ENCODE measurements at regions of chr17 and their contacts with region 1.

Region 1: GRCh38 chr17:8073627-8074484 is 13.7 kb downstream of the ALOX12B start:
- DNase-seq: no peak
- H3K4me3 ChIP-seq: no peak overlapping the region
- H3K27me3 ChIP-seq: peaks cover 52% of the 10 kb centered on the region
- CTCF ChIP-seq: peak; percentile 94

Region 2: DNA sequence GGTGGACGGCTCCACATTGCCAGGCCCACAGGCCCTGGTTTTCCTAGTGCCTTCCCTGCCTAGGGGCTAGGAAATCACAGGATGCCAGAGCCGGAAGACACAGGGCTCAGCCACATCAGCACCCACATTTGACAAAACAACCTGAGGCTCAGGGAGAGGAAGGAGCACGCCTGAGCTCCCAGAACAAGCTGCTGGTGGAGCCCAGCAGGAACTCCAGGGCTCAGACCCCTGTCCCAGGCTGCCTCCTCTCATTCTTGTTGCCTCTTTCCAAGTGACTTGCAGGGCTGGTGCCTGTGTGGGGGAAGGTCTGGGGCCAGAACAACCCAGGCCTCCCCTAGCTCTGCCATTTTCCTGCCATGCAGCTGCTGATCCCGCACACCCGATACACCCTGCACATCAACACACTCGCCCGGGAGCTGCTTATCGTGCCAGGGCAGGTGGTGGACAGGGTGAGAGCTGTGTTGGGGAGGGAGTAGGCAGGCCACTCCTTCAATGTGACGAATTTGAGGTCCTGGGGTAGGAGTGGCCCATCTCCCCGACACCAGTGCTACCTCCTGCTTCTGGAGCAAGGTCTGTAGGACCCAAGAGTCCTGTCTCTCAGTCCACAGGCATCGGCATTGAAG is 27.4 kb before region 1 on chr17:
- CTCF ChIA-PET with region 1: interaction called, 14 read pairs
- POLR2A ChIA-PET with region 1: no interaction called
- DNase-seq: no peak
- H3K4me3 ChIP-seq: no peak overlapping the region
- H3K27me3 ChIP-seq: peaks cover 22% of the 10 kb centered on the region
- CTCF ChIP-seq: no peak

Region 3: GRCh38 chr17:8062807-8063483 is 10.9 kb before region 1 on chr17:
- CTCF ChIA-PET with region 1: interaction called, 72 read pairs
- POLR2A ChIA-PET with region 1: no interaction called
- DNase-seq: no peak
- H3K4me3 ChIP-seq: no peak overlapping the region
- H3K27me3 ChIP-seq: peaks cover 46% of the 10 kb centered on the region
- CTCF ChIP-seq: no peak

Region 4: GRCh38 chr17:8091033-8091687 is 17.3 kb after region 1 on chr17:
- CTCF ChIA-PET with region 1: interaction called, 63 read pairs
- POLR2A ChIA-PET with region 1: no interaction called
- DNase-seq: no peak
- H3K4me3 ChIP-seq: no peak overlapping the region
- H3K27me3 ChIP-seq: peaks cover 25% of the 10 kb centered on the region
- CTCF ChIP-seq: no peak

Region 5: DNA sequence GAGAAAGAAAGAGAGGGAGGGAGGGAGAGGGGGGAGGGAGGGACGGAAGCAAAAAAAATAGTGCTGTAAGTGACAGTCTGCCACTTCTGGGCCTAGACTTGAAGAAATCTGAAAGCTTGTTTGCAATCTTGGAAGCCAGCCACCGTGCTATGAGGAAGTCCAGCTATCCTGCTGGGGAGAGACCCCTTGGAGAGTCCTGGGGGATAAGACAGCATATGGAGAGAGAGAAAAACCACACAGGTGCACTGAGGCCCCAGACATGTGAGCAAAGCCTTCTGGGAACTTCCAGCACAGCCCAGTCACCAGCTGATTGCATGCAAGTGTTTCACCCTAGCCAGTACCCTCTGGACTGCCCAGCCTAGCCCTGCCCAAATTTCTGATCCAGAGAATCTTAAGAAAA is 26.3 kb after region 1 on chr17:
- CTCF ChIA-PET with region 1: interaction called, 63 read pairs
- POLR2A ChIA-PET with region 1: no interaction called
- DNase-seq: no peak
- H3K4me3 ChIP-seq: no peak overlapping the region
- H3K27me3 ChIP-seq: peaks cover 11% of the 10 kb centered on the region; the same call in 1 of the 2 replicates
- CTCF ChIP-seq: no peak

Region 6: DNA sequence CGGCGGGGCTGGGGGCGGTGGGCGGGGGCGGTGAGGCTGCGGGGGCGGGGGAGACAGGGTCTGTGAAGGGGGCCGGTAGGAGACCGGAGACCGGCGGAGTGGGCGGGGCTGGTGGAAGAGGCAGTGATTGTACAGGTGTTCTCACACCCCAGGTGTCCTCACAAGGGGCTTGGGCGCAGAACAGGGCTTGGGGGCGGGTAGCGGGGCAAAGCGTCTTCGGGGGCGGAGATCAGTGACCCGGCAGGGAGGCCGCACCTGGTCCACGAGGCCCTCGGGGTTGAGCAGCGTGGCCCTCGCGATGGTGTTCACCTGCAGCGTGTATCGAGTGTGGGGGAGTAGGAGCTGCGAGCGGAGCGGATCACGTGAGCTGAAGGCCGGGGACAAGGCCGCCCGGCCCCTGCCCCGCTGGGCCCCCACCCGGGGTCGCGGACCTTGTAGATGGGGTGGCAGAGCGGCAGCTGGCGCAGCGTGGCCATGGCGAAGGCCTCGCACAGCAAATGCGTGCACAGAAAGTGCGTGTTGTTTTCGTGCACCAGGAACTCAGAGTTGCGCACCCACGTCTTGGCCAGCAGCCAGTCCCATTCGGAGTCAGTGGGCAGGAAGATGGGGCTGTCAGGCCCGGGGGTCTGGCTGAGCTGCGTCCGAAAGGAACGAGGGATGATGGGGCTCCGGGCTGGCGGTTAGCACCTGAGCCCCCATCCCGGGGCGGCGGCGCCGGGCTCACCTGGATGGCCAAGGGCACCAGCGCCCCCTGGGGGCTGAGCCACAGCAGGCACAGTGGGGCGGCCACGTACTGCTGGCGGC is 36.0 kb after region 1 on chr17:
- CTCF ChIA-PET with region 1: interaction called, 54 read pairs
- POLR2A ChIA-PET with region 1: no interaction called
- DNase-seq: no peak
- H3K4me3 ChIP-seq: no peak overlapping the region
- H3K27me3 ChIP-seq: peaks cover 32% of the 10 kb centered on the region
- CTCF ChIP-seq: peak; percentile 77

Region 7: GRCh38 chr17:8248751-8249607 is 175.1 kb after region 1 on chr17 and contains the start of gene PFAS:
- CTCF ChIA-PET with region 1: no interaction called
- POLR2A ChIA-PET with region 1: no interaction called
- DNase-seq: peak; percentile 31
- H3K4me3 ChIP-seq: peak within 1 kb of the TSS; percentile 85
- H3K27me3 ChIP-seq: no peaks in the 10 kb centered on the region
- CTCF ChIP-seq: no peak
- polyA plus RNA-seq, gene PFAS: 12.2 and 15.6 TPM in 2 replicates

Region 8: DNA sequence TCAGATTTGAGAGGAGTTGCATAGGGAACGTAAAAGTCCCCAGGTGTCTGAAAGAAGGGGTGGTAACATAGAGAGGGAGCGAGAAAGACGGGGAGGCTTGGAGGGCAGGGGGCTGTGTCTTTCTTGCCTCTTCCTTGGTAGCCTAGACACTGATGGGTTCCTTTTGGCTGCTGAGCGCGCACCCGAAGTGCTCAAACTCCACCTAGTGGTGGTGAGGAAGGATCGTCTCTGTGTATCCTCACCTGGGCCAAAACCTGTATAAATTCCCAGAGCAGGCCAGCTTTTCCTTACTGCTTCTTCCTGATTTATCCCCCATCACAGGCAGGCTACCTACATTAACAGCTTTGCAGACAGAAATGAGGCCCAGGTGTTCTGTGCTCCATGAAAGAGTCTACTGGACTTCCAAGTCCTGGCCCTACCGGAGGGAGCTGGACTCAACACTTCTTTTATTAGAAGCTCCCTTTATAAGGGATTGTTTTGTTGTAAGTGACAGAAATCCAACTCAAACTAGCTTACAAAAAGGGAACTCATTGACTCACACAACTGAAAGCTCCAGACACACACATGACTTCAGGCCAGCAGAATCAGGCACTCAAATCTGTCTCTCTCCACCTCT is 226.9 kb after region 1 on chr17:
- CTCF ChIA-PET with region 1: interaction called, 11 read pairs
- POLR2A ChIA-PET with region 1: no interaction called
- DNase-seq: no peak
- H3K4me3 ChIP-seq: no peak overlapping the region
- H3K27me3 ChIP-seq: no peaks in the 10 kb centered on the region
- CTCF ChIP-seq: peak; percentile 85

Measured in BJ (cell line).